Keratinocyte (primary cell): ENCODE measurements at regions of chr19 and their contacts with region 1.

Region 1: GRCh38 chr19:29605653-29606419 is at the start of gene POP4:
- DNase-seq: peak; percentile 40
- H3K4me3 ChIP-seq: peak within 1 kb of the TSS; percentile 93 to 98 (median 94)
- H3K27ac ChIP-seq: peak within 1 kb of the TSS; percentile 88
- H3K4me1 ChIP-seq: peaks cover 6% of the 10 kb centered on the region
- H3K27me3 ChIP-seq: no peaks in the 10 kb centered on the region
- CTCF ChIP-seq: no peak
- polyA plus RNA-seq, gene POP4: 93.9 to 110 TPM (median 104 TPM) in 3 replicates

Region 2: GRCh38 chr19:29714953-29715700 is 109.3 kb after region 1 on chr19 and contains the start of gene C19orf12:
- dilution Hi-C with region 1: loop called (anchors 10 kb)
- DNase-seq: no peak
- H3K4me3 ChIP-seq: peak within 1 kb of the TSS; percentile 66 to 77 (median 71)
- H3K27ac ChIP-seq: peak within 1 kb of the TSS; percentile 66
- H3K4me1 ChIP-seq: peaks cover 9% of the 10 kb centered on the region
- H3K27me3 ChIP-seq: no peaks in the 10 kb centered on the region
- CTCF ChIP-seq: no peak
- polyA plus RNA-seq, gene C19orf12: 10.9 to 14.0 TPM (median 12.3 TPM) in 3 replicates